Natural killer cell (primary cell): ENCODE measurements at regions of chr4 and their contacts with region 1.

Region 1: DNA sequence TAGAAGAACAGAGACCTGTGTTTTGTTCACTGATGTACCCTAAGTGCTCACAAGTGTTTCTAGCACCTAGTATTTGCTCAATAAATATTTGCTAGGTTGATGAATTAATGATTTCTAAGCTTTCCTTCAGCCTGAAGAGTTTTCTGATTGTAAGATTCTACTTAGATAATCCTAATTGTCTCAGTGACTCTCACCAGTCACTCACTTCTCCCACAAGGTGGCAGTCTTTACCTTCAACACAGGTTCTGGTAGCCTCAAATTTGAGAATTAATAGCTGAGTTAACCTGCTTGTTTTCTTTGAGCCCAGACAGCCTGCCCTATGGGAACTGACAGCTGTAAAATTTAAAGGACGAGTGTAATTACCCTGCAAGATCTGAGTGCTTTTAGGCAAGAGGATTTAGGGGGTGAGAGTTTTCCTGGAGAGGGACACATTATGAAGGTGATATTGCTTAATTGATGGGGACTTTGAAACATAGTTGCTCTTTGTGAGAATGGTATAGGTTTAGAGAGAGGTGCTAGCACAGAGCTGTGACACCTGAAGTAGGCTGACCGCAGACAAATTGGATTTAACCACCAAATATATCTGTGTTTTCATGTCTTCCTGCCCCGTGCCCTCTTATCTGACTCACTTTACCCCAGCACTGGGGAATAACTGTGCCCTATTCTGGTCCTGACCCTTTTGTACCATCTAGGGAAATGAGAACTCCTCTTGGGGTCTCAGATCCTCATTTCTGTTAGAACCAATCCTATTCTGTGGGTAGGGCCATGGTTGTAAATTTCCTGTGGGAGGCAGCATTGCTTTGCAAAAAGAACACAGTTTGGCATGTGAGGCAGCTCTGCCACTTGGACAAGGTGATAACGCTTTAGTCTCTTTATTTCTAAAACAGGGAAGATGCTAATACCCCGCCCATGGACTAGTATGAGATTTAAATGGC is 27.7 kb downstream of the CD38 start:
- DNase-seq: peak in 1 of 2 donors; percentile 78
- ATAC-seq: peak; percentile 74 to 83 (median 77)
- H3K4me3 ChIP-seq: no peak overlapping the region
- H3K4me3 Mint-ChIP-seq: no peak overlapping the region
- H3K27ac ChIP-seq: no peak overlapping the region
- H3K27ac Mint-ChIP-seq: peak overlapping the region; percentile 24 to 54
- H3K4me1 ChIP-seq: peaks cover 13% of the 10 kb centered on the region
- H3K4me1 Mint-ChIP-seq: peaks cover 49 to 52% of the 10 kb centered on the region in 2 donors
- H3K27me3 ChIP-seq: no peaks in the 10 kb centered on the region
- H3K27me3 Mint-ChIP-seq: no peaks in the 10 kb centered on the region
- CTCF ChIP-seq: peak; percentile 78

Region 2: GRCh38 chr4:15882675-15883086 is 76.8 kb after region 1 on chr4:
- intact Hi-C with region 1: loop called (anchors 1 kb)
- DNase-seq: peak; percentile 41 to 81
- ATAC-seq: peak; percentile 92 to 97 (median 96)
- H3K4me3 ChIP-seq: no peak overlapping the region
- H3K4me3 Mint-ChIP-seq: peak overlapping the region; percentile 73
- H3K27ac ChIP-seq: no peak overlapping the region
- H3K27ac Mint-ChIP-seq: peak overlapping the region; percentile 54 to 68
- H3K4me1 ChIP-seq: peaks cover 16% of the 10 kb centered on the region
- H3K4me1 Mint-ChIP-seq: peaks cover 28% of the 10 kb centered on the region in 2 donors
- H3K27me3 ChIP-seq: no peaks in the 10 kb centered on the region
- H3K27me3 Mint-ChIP-seq: no peaks in the 10 kb centered on the region
- CTCF ChIP-seq: peak; percentile 88

Region 3: DNA sequence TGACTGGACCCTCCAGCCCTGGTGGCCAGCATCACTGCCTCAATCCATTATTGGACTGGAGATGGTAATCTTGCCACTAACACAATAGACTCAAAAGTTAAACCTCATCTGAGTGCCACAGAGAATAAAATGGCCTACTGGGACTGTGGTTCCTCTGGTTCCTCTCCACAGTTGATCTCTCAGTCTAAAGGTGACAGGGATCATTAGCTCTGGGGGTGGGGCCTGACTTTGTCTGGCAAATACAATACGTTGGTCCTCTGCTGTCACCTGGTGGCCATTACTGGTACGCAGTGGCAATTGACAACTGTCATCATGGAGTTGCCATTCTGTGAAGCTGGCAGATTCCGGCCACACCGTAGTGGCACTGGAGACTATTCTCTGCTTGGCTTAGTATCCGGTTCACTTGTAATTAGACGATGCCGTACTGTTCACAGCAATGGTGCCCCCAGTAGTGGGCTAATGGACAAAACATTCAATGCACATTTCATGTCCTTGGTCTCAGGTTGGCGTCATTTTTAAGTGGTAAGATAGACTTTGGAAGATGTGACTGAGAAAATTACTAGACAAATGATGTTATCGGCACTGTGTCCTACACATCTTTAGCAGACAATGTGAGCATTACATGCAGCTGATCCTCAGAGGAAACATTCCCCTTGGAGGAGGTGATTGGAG is 150.5 kb after region 1 on chr4:
- intact Hi-C with region 1: loop called (anchors 1 kb)
- DNase-seq: peak; percentile 75 to 86
- ATAC-seq: peak; percentile 82 to 91 (median 89)
- H3K4me3 ChIP-seq: no peak overlapping the region
- H3K4me3 Mint-ChIP-seq: peak overlapping the region; percentile 70
- H3K27ac ChIP-seq: no peak overlapping the region
- H3K27ac Mint-ChIP-seq: peak overlapping the region; percentile 81 to 83
- H3K4me1 ChIP-seq: peaks cover 16% of the 10 kb centered on the region
- H3K4me1 Mint-ChIP-seq: peaks cover 44 to 55% of the 10 kb centered on the region in 2 donors
- H3K27me3 ChIP-seq: no peaks in the 10 kb centered on the region
- H3K27me3 Mint-ChIP-seq: no peaks in the 10 kb centered on the region
- CTCF ChIP-seq: peak; percentile 86

Region 4: DNA sequence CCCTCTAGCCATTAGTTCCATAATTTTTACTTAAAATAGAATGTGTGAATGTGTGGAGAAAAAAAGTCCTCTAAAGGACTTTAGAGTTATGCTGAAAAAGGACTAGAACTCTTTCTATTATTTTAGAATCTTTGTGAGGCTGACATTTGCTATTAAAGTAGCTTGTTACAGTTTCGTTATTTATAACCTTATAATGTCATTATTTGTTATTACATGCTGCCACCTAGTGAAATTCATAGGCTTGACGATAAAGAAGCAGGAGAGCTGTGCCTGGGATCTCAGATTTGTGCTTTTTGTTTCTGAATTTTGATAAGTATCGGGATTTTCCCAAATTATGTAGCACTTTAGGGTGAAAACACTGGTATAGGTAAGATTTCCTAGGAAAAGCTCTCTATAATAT is 458.9 kb after region 1 on chr4:
- intact Hi-C with region 1: loop called (anchors 5 kb)
- DNase-seq: peak in 1 of 2 donors; percentile 66
- ATAC-seq: peak in 2 of 3 donors; percentile 56 to 73
- H3K4me3 ChIP-seq: no peak overlapping the region
- H3K4me3 Mint-ChIP-seq: no peak overlapping the region
- H3K27ac ChIP-seq: no peak overlapping the region
- H3K27ac Mint-ChIP-seq: no peak overlapping the region
- H3K4me1 ChIP-seq: no peaks in the 10 kb centered on the region
- H3K4me1 Mint-ChIP-seq: no peaks in the 10 kb centered on the region
- H3K27me3 ChIP-seq: no peaks in the 10 kb centered on the region
- H3K27me3 Mint-ChIP-seq: no peaks in the 10 kb centered on the region
- CTCF ChIP-seq: peak; percentile 54